Activated naive CD4-positive, alpha-beta T cell treated with anti-CD3 and anti-CD28 coated beads for 36 hours (primary cell): ENCODE measurements at regions of chr10 and their contacts with region 1.

Region 1: DNA sequence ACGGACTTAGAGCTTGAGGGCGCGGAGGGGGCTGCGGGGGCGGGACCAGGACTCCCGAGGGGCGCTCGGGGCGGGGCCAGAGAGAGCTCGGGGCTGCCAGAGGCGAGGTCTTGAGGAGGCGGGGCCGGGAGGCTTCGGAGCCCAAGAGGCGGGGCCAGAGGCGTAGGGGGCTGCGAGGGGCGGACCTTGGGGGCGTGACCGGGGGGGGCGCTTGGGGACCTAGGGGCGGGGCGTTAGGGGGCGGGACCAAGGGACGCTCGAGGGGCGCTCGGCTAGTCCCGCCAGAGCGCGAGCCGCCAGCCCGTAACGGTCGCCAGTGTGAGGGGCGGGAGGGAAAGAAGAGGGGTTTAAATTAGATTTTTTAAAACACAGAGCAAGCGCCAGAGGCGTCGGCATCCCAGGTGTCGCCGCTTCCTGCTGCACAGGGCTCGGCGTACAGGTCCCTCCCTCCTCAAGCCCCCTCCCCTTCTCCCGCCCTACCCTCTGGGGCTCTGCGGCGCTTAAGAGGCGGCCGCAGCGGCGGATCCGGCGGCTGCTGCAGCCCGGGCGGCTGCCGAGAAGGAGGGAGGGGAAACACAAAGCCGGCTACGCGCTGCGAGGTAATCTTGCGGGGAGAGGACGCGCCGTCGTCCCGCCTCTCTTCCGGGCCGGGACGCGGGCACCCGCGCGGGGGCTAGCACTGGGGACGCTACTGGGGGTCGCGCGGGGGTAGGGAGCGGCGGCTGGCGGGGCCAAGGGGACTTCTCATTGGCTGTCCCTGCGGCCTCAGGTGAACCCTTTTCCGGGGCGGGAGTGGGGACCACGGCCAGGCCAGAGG is at the start of gene ADD3:
- DNase-seq: peak; percentile 85
- H3K4me3 Mint-ChIP-seq: no peak within 1 kb of the TSS
- H3K27ac Mint-ChIP-seq: peak within 1 kb of the TSS; percentile 91
- H3K4me1 Mint-ChIP-seq: peaks cover 45% of the 10 kb centered on the region
- H3K27me3 Mint-ChIP-seq: no peaks in the 10 kb centered on the region
- total RNA-seq, gene ADD3: 85.2 to 85.8 TPM

Region 2: GRCh38 chr10:109922976-109923921 is 84.7 kb before region 1 on chr10 and contains the start of gene XPNPEP1:
- CTCF ChIA-PET with region 1: no interaction called
- intact Hi-C with region 1: loop called (anchors 1 kb)
- DNase-seq: peak; percentile 86
- H3K4me3 Mint-ChIP-seq: peak within 1 kb of the TSS; percentile 84
- H3K27ac Mint-ChIP-seq: peak within 1 kb of the TSS; percentile 81
- H3K4me1 Mint-ChIP-seq: peaks cover 53% of the 10 kb centered on the region
- H3K27me3 Mint-ChIP-seq: no peaks in the 10 kb centered on the region
- total RNA-seq, gene XPNPEP1: 52.2 to 52.6 TPM

Region 3: DNA sequence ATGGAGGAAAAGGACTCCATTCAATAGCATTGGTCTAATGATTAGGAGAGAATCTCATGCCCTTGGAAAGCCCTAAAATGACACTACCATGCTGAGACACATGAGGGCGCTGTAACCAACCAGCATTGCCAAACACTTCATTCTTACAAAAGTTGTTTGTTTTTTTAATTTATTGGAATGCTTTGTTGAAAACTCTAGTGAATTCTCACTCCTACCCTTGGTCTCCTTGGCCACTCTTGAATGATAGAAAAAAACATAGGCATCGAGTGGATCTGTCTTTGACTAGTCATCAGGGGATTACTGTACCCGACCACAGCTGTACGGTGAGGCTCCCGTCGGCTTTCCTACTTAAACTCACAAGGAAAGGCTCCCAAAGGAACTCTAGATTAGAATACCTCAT is 29.4 kb before region 1 on chr10:
- CTCF ChIA-PET with region 1: interaction called, 12 read pairs
- intact Hi-C with region 1: loop called (anchors 1 kb)
- DNase-seq: peak; percentile 87
- H3K4me3 Mint-ChIP-seq: no peak overlapping the region
- H3K27ac Mint-ChIP-seq: no peak overlapping the region
- H3K4me1 Mint-ChIP-seq: peaks cover 14% of the 10 kb centered on the region
- H3K27me3 Mint-ChIP-seq: no peaks in the 10 kb centered on the region

Region 4: GRCh38 chr10:109992485-109992884 is 15.4 kb before region 1 on chr10:
- CTCF ChIA-PET with region 1: no interaction called
- intact Hi-C with region 1: no loop called
- DNase-seq: no peak
- H3K4me3 Mint-ChIP-seq: no peak overlapping the region
- H3K27ac Mint-ChIP-seq: no peak overlapping the region
- H3K4me1 Mint-ChIP-seq: peaks cover 26% of the 10 kb centered on the region
- H3K27me3 Mint-ChIP-seq: no peaks in the 10 kb centered on the region

Region 5: DNA sequence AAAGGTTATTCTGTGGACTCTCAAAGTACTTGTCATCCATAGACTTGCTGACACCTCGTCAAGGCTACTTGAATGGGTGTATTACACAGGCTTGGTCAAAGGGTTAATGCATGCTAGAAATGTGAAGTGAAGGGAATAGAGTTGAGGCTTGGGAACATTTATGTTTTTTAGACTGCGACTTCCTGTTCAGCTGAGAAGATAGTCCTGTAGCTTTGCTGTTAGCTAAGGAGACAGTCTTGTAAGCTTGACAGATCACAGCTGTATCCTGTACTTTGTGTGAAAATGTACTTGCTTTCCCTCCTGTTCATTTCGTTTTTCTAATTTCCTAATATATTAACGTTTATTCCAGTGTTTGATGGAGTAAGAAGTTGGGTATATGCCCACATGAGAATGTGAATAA is 52.0 kb after region 1 on chr10:
- CTCF ChIA-PET with region 1: interaction called, 6 read pairs
- intact Hi-C with region 1: loop called (anchors 1 kb)
- DNase-seq: no peak
- H3K4me3 Mint-ChIP-seq: no peak overlapping the region
- H3K27ac Mint-ChIP-seq: peak overlapping the region; percentile 75
- H3K4me1 Mint-ChIP-seq: peaks cover 84% of the 10 kb centered on the region
- H3K27me3 Mint-ChIP-seq: no peaks in the 10 kb centered on the region

Region 6: GRCh38 chr10:110076559-110077318 is 68.8 kb after region 1 on chr10:
- CTCF ChIA-PET with region 1: interaction called, 3 read pairs
- intact Hi-C with region 1: loop called (anchors 1 kb)
- DNase-seq: no peak
- H3K4me3 Mint-ChIP-seq: peak overlapping the region; percentile 70
- H3K27ac Mint-ChIP-seq: peak overlapping the region; percentile 92
- H3K4me1 Mint-ChIP-seq: peaks cover 87% of the 10 kb centered on the region
- H3K27me3 Mint-ChIP-seq: no peaks in the 10 kb centered on the region

Region 7: GRCh38 chr10:110168601-110169481 is 160.9 kb after region 1 on chr10:
- CTCF ChIA-PET with region 1: no interaction called
- intact Hi-C with region 1: no loop called
- DNase-seq: peak; percentile 47
- H3K4me3 Mint-ChIP-seq: no peak overlapping the region
- H3K27ac Mint-ChIP-seq: no peak overlapping the region
- H3K4me1 Mint-ChIP-seq: peaks cover 27% of the 10 kb centered on the region
- H3K27me3 Mint-ChIP-seq: peaks cover 65% of the 10 kb centered on the region

Region 8: GRCh38 chr10:110225756-110226542 is 218.0 kb after region 1 on chr10:
- CTCF ChIA-PET with region 1: no interaction called
- intact Hi-C with region 1: loop called (anchors 1 kb)
- DNase-seq: peak; percentile 93
- H3K4me3 Mint-ChIP-seq: peak overlapping the region; percentile 97
- H3K27ac Mint-ChIP-seq: peak overlapping the region; percentile 94
- H3K4me1 Mint-ChIP-seq: peaks cover 47% of the 10 kb centered on the region
- H3K27me3 Mint-ChIP-seq: no peaks in the 10 kb centered on the region

Region 9: GRCh38 chr10:110864662-110865140 is 856.8 kb after region 1 on chr10:
- CTCF ChIA-PET with region 1: no interaction called
- intact Hi-C with region 1: loop called (anchors 5 kb)
- DNase-seq: peak; percentile 69
- H3K4me3 Mint-ChIP-seq: peak overlapping the region; percentile 58
- H3K27ac Mint-ChIP-seq: peak overlapping the region; percentile 84
- H3K4me1 Mint-ChIP-seq: peaks cover 96% of the 10 kb centered on the region
- H3K27me3 Mint-ChIP-seq: no peaks in the 10 kb centered on the region